Activated T-helper 1 cell treated with anti-CD3 and anti-CD28 coated beads, Interleukin-12 subunit alpha, Interleukin-12 subunit beta, Interleukin-2, Interleukin-4 antibody, amounts not matched to agents 30 ng/mL and 10 ng/mL and 1 ng/mL, durations not matched to agents 14 hours and 24 hours and 36 hours (primary cell): ENCODE measurements at regions of chr17 and their contacts with region 1.

Region 1: DNA sequence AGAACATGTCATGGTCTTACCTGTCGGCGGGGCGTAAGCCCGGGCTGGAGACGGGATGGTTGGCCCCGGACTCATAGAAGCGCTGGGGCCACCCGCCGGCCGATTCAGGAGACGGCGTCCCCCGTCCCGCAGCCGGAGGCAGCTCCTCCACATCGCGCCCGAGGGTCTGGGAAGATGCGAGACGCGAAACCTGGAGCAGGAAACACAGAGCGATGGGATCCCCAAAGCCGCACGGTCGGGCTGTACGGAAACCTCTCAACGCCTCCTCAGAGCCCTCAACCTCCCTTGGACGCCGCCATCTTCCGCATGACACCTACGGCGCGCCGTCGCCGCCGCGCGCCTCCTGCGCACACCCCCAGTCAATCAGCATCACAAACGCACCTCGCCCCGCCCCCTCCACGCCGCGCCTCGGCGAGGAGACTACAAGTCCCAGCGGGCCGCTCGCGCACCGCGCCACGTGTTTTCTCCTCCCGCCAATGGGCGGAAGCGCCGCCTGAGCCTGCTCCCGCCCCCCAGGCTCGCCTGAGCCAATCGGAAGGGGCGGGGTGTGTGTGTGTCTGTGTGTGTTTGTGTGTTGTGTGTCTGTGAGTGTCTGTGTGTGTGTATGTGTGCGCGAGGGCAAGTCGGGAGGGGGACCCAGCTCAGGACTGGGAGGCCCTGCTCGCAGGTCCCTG is at the starts of genes ATPAF2 and GID4:
- DNase-seq: peak; percentile 100
- H3K4me3 Mint-ChIP-seq: peak within 1 kb of the TSS; percentile 100
- H3K27ac Mint-ChIP-seq: peak within 1 kb of the TSS; percentile 99
- H3K4me1 Mint-ChIP-seq: peaks cover 43% of the 10 kb centered on the region
- H3K27me3 Mint-ChIP-seq: no peaks in the 10 kb centered on the region
- total RNA-seq, gene ATPAF2: 34.9 and 37.8 TPM in 2 replicates
- total RNA-seq, gene GID4: 9.6 and 10.0 TPM in 2 replicates

Region 2: DNA sequence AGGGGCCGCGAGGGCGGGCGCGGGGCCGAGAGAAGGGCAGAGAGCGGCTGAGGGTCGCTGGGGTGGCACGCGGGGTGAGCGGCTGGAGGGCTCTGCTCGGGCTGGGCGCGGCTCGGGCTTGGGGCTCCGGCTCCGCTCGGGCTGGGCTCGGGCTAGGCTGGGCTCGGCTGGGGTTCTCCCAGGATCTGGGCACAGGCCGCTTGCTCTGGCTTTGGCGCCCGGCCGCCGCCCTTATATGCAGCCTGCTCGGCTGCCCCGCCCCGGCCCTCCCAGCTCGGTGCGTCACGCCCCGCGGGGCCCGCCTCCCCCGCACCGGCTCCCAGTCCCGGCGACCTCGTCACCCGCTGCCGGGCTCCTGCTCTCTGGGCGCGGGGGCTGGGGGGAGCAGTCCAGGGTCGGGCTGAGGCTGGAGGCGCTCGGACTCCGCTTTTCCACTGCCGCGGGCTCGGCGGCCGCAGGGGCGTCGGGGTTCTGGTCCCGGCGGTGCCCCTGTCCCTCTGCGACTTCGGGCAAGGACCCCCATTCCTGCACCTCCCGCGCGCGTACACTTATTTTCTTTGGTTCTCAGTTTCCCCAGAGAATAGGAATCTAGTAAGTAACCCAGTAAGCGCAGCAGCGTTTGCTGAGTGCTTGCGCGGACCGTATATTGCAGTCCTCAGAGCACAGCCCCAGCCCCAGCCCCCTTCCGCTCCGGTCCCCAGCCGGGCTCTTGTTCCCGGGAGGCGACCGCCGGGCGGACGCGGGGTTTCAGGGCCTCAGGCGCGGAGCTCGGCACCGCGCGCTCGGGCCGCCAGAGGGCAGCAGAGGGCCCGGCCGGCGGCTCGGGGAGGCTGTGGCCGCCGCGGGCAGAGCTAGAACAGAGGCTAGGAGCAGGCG is 542.6 kb before region 1 on chr17 and contains the start of gene RASD1:
- intact Hi-C with region 1: loop called (anchors 10 kb)
- DNase-seq: peak; percentile 74
- H3K4me3 Mint-ChIP-seq: peak within 1 kb of the TSS; percentile 78
- H3K27ac Mint-ChIP-seq: peak within 1 kb of the TSS; percentile 61
- H3K4me1 Mint-ChIP-seq: peaks cover 14% of the 10 kb centered on the region
- H3K27me3 Mint-ChIP-seq: peaks cover 14% of the 10 kb centered on the region
- total RNA-seq, gene RASD1: 10.1 and 12.9 TPM in 2 replicates

Region 3: DNA sequence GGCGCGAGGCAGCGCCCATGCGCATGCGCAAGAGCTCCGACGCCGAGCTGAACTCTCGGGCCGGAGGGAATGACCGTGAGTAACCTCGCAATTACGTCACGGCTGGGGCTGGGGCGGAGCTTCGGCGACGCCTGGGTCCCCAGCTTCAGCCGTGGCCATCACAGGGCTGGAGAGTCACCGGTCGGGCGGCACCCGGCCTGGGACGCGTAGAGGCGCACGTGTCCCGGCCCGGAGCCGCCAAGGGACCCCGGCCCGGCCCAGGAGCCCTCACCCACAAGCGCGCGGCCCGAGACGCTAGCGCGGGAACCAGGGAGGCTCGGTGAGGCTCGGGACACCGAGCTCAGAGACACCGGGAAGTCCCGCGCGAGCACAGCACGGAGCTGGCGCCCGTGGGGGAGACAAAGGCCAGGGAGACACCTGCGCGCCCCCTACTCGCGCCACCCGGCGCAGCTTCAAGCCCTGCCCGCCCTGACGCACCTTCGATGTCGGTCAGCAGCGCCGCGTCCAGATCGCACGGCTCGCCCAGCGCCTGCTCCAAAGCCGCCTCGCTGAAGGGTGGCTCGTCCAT is 202.7 kb before region 1 on chr17:
- intact Hi-C with region 1: loop called (anchors 2 kb)
- DNase-seq: peak; percentile 95
- H3K4me3 Mint-ChIP-seq: peak overlapping the region; percentile 93
- H3K27ac Mint-ChIP-seq: peak overlapping the region; percentile 86
- H3K4me1 Mint-ChIP-seq: peaks cover 69% of the 10 kb centered on the region
- H3K27me3 Mint-ChIP-seq: no peaks in the 10 kb centered on the region

Region 4: GRCh38 chr17:17890773-17891759 is 147.9 kb before region 1 on chr17:
- intact Hi-C with region 1: loop called (anchors 1 kb)
- DNase-seq: peak; percentile 25
- H3K4me3 Mint-ChIP-seq: no peak overlapping the region
- H3K27ac Mint-ChIP-seq: no peak overlapping the region
- H3K4me1 Mint-ChIP-seq: peaks cover 8% of the 10 kb centered on the region
- H3K27me3 Mint-ChIP-seq: no peaks in the 10 kb centered on the region

Region 5: GRCh38 chr17:18064053-18064452 is 25.1 kb after region 1 on chr17:
- intact Hi-C with region 1: no loop called
- DNase-seq: no peak
- H3K4me3 Mint-ChIP-seq: no peak overlapping the region
- H3K27ac Mint-ChIP-seq: no peak overlapping the region
- H3K4me1 Mint-ChIP-seq: no peaks in the 10 kb centered on the region
- H3K27me3 Mint-ChIP-seq: no peaks in the 10 kb centered on the region

Region 6: DNA sequence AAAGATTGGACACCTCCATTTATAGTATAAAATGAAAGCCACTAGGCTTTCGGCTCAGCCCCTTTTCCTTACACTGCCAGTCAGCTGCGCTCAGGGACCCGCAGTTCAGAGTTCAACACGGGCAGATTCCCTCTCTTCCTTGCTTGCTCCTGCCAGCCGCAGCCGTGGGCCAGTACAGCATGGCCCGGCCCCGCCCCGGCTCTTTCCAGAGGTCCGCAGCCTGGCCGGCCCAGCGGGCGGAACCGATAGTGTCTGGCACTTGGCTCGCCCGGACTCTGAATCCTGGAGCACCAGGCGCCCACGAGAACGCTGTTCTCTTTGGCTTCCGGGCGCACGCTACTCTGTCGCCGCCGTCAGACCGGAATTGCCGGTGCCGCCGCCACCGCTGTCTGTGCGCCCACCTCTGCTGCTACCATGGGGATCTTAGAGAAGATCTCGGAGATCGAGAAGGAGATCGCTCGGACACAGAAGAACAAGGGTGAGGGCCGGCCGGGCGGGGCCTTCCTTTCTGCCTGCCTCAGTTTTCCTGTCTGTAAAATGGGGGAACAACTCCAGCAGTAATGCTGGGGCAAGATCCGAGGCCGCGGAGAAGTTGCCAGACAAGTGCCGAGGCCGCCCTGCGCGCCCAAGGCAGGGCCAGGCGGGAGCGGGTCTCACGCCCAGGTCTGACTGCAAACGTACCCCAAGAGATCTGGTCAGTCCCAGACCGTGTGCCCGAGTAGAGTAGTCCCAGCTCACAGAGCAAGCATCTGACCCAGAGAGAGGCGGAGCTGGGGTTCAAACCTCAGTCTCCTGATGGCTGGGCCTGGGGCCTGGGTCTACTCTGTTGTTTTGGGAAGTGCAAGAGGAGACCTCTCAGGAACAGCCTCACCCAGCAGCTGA is 48.9 kb after region 1 on chr17 and contains the start of gene DRG2:
- intact Hi-C with region 1: loop called (anchors 1 kb)
- DNase-seq: peak; percentile 84
- H3K4me3 Mint-ChIP-seq: peak within 1 kb of the TSS; percentile 95
- H3K27ac Mint-ChIP-seq: peak within 1 kb of the TSS; percentile 96
- H3K4me1 Mint-ChIP-seq: peaks cover 17% of the 10 kb centered on the region
- H3K27me3 Mint-ChIP-seq: no peaks in the 10 kb centered on the region
- total RNA-seq, gene DRG2: 67.5 and 69.2 TPM in 2 replicates

Region 7: GRCh38 chr17:18314731-18315561 is 275.9 kb after region 1 on chr17 and contains the starts of genes SMCR8 and TOP3A:
- intact Hi-C with region 1: loop called (anchors 1 kb)
- DNase-seq: peak; percentile 95
- H3K4me3 Mint-ChIP-seq: peak within 1 kb of the TSS; percentile 93
- H3K27ac Mint-ChIP-seq: peak within 1 kb of the TSS; percentile 100
- H3K4me1 Mint-ChIP-seq: peaks cover 75% of the 10 kb centered on the region
- H3K27me3 Mint-ChIP-seq: peaks cover 2% of the 10 kb centered on the region
- total RNA-seq, gene SMCR8: 18.7 and 19.2 TPM in 2 replicates
- total RNA-seq, gene TOP3A: 75.2 and 87.2 TPM in 2 replicates